ENCODE measurements at regions of chr18 and their contacts with region 1.

Region 1: GRCh38 chr18:23619388-23619881 is 33.1 kb upstream of the NPC1 start:
- DNase-seq: no peak
- ATAC-seq: peak; percentile 42
- H3K4me3 ChIP-seq: peak overlapping the region; percentile 57; the same call in 1 of the 2 replicates
- H3K27ac ChIP-seq: no peak overlapping the region
- H3K4me1 ChIP-seq: peaks cover 17% of the 10 kb centered on the region
- H3K27me3 ChIP-seq: peaks cover 0 to 5% of the 10 kb centered on the region in 2 experiments; a peak in 2 of 4 replicates
- CTCF ChIP-seq: no peak
- EP300 ChIP-seq: no peak; a peak in 1 of 4 replicates
- POLR2A ChIP-seq: no peak
- RAD21 ChIP-seq: no peak

Region 2: DNA sequence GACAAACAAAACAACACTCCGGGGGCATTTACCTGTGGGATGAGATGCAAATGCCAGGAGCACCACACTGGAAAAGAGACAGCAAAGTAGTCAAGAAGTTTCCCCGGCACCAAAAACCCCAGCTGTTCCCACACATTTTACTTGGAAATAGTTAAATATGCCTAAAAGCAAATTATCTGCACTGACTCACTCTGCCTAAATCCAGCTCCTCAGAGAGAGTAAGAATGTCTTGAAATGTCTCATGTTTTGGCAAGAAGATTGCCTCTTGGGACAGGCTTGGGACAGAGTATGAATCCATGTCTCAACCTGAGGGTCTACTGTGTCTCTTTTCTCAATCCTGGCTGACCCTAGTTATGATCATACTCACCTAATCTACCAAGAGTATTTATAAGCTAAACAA is 253.8 kb before region 1 on chr18:
- CTCF ChIA-PET with region 1: no interaction called
- POLR2A ChIA-PET with region 1: no interaction called
- RAD21 ChIA-PET with region 1: no interaction called
- SMC1A ChIA-PET with region 1: no interaction called
- in situ Hi-C with region 1: no loop called
- intact Hi-C with region 1: no loop called
- DNase-seq: no peak
- ATAC-seq: no peak
- H3K4me3 ChIP-seq: no peak overlapping the region
- H3K27ac ChIP-seq: no peak overlapping the region
- H3K4me1 ChIP-seq: no peaks in the 10 kb centered on the region
- H3K27me3 ChIP-seq: no peaks in the 10 kb centered on the region
- CTCF ChIP-seq: no peak
- EP300 ChIP-seq: no peak
- POLR2A ChIP-seq: no peak
- RAD21 ChIP-seq: no peak

Region 3: GRCh38 chr18:23586249-23587196 is 32.9 kb before region 1 on chr18 and contains the start of gene NPC1:
- CTCF ChIA-PET with region 1: interaction called, 18 read pairs
- POLR2A ChIA-PET with region 1: interaction called, 33 read pairs
- RAD21 ChIA-PET with region 1: interaction called, 22 read pairs
- SMC1A ChIA-PET with region 1: interaction called, 28 read pairs
- in situ Hi-C with region 1: no loop called
- intact Hi-C with region 1: loop called (anchors 2 kb)
- DNase-seq: peak; percentile 67
- ATAC-seq: peak; percentile 95
- H3K4me3 ChIP-seq: peak within 1 kb of the TSS; percentile 91
- H3K27ac ChIP-seq: peak within 1 kb of the TSS; percentile 96
- H3K4me1 ChIP-seq: peaks cover 7% of the 10 kb centered on the region; the same call in 1 of the 2 replicates
- H3K27me3 ChIP-seq: no peaks in the 10 kb centered on the region
- CTCF ChIP-seq: peak; percentile 81 to 88 (median 85)
- EP300 ChIP-seq: no peak
- POLR2A ChIP-seq: peak; percentile 93
- RAD21 ChIP-seq: peak; percentile 65
- polyA plus RNA-seq, gene NPC1: 10.1 to 11.0 TPM

Region 4: GRCh38 chr18:23596183-23596582 is 23.3 kb before region 1 on chr18:
- CTCF ChIA-PET with region 1: interaction called, 11 read pairs
- POLR2A ChIA-PET with region 1: no interaction called
- RAD21 ChIA-PET with region 1: interaction called, 4 read pairs
- SMC1A ChIA-PET with region 1: interaction called, 23 read pairs
- in situ Hi-C with region 1: no loop called
- intact Hi-C with region 1: no loop called
- DNase-seq: no peak
- ATAC-seq: no peak
- H3K4me3 ChIP-seq: no peak overlapping the region
- H3K27ac ChIP-seq: no peak overlapping the region
- H3K4me1 ChIP-seq: no peaks in the 10 kb centered on the region
- H3K27me3 ChIP-seq: no peaks in the 10 kb centered on the region
- CTCF ChIP-seq: no peak
- EP300 ChIP-seq: no peak
- POLR2A ChIP-seq: no peak
- RAD21 ChIP-seq: no peak

Region 5: DNA sequence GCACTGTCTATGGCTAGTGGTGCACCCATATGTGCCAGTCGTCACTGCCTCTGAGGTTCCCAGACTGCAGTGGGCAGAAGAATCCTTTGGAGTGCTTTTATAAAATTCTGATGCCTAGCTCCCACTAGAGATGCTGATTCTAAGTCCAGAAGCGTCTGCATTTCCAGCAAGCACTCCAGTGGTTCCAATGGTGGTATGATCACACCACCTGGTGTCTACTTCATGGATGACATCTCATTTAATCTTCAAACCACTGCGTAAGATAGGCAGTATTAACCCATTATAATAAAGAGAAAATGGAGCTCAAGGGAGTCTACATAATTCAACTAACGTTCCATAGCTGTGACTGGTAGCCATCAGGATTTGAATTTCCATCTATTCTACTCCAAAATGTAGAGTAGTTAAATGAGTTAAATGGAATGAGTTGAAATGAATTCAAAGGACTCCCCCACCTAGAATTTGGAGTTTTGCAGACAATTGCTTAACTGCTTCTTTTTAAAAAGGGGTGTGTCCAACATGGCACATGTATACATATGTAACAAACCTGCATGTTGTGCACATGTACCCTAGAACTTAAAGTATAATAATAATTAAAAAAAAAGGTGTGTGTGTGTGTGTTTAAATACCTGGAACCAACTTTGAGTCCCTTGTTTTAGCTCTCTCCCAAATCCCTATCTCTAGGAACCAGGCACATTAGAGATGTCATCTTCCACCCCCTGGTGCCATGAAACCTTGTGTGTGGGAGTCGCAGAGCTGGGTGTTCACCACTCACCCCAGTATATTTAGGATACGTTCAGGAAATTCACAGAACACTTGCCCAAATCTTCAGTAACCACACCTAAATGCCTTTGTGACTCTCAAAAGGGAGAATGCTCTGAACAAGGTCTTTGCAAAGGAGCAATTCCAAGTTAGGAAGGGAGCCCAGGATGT is 83.9 kb after region 1 on chr18:
- CTCF ChIA-PET with region 1: interaction called, 233 read pairs
- POLR2A ChIA-PET with region 1: no interaction called
- RAD21 ChIA-PET with region 1: interaction called, 148 read pairs
- SMC1A ChIA-PET with region 1: interaction called, 167 read pairs
- in situ Hi-C with region 1: no loop called
- intact Hi-C with region 1: loop called (anchors 1 kb)
- DNase-seq: no peak
- ATAC-seq: peak; percentile 92
- H3K4me3 ChIP-seq: no peak overlapping the region
- H3K27ac ChIP-seq: no peak overlapping the region
- H3K4me1 ChIP-seq: no peaks in the 10 kb centered on the region
- H3K27me3 ChIP-seq: no peaks in the 10 kb centered on the region
- CTCF ChIP-seq: peak; percentile 35 to 79 (median 41); a peak in 5 of 6 replicates
- EP300 ChIP-seq: no peak
- POLR2A ChIP-seq: no peak
- RAD21 ChIP-seq: peak; percentile 95

Region 6: GRCh38 chr18:23805898-23806297 is 186.5 kb after region 1 on chr18:
- CTCF ChIA-PET with region 1: interaction called, 56 read pairs
- POLR2A ChIA-PET with region 1: interaction called, 8 read pairs
- RAD21 ChIA-PET with region 1: interaction called, 11 read pairs
- SMC1A ChIA-PET with region 1: interaction called, 9 read pairs
- in situ Hi-C with region 1: loop called (anchors 5 kb)
- intact Hi-C with region 1: no loop called
- DNase-seq: no peak
- ATAC-seq: no peak
- H3K4me3 ChIP-seq: no peak overlapping the region
- H3K27ac ChIP-seq: no peak overlapping the region
- H3K4me1 ChIP-seq: peaks cover 10% of the 10 kb centered on the region
- H3K27me3 ChIP-seq: peaks cover 0 to 5% of the 10 kb centered on the region in 2 experiments; a peak in 1 of 4 replicates
- CTCF ChIP-seq: no peak
- EP300 ChIP-seq: no peak
- POLR2A ChIP-seq: no peak
- RAD21 ChIP-seq: no peak

Region 7: GRCh38 chr18:23812546-23813440 is 193.4 kb after region 1 on chr18:
- CTCF ChIA-PET with region 1: interaction called, 56 read pairs
- POLR2A ChIA-PET with region 1: interaction called, 8 read pairs
- RAD21 ChIA-PET with region 1: interaction called, 11 read pairs
- SMC1A ChIA-PET with region 1: interaction called, 9 read pairs
- in situ Hi-C with region 1: loop called (anchors 5 kb)
- intact Hi-C with region 1: loop called (anchors 1 kb)
- DNase-seq: no peak
- ATAC-seq: no peak
- H3K4me3 ChIP-seq: no peak overlapping the region
- H3K27ac ChIP-seq: no peak overlapping the region
- H3K4me1 ChIP-seq: peaks cover 15% of the 10 kb centered on the region
- H3K27me3 ChIP-seq: no peaks in the 10 kb centered on the region; a peak in 1 of 4 replicates
- CTCF ChIP-seq: peak; percentile 30 to 53 (median 38); a peak in 3 of 6 replicates
- EP300 ChIP-seq: no peak
- POLR2A ChIP-seq: no peak
- RAD21 ChIP-seq: peak; percentile 67

Region 8: DNA sequence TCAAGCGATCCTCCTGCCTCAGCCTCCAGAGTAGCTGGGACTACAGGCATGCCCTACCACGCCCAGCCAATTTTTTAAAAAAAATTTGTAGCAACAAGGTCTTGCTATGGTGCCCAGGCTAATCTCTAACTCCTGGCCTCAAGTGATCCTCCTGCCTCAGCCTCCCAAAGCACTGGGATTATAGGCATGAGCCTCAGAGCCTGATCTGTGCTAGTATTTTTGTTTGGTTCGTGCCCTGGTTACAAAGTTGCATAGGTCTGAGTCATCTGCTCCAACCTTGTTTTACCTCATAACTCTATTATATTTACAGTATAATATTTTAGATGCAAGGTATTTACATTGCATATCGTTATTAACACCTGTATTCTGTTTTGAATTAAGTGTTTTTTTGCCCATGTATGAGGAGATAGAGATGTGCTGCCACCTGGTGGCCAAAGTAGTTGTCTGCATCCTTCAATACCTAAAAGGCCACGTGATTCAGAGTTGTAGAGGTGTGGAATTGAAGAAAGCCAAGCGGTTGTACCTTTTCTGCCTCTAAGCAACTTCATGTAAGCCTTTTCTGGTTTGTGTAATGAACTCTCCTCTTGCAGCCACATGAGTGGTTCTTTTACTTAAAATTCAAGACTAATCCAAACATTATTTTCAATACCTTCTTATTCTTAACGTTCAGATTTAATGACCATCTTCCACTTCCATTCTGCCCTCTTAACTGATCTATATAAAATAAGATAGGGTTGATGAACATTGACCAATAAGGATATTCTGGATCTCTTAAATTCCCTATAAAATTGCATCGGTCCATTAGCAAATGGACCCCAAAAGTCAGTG is 499.5 kb after region 1 on chr18:
- CTCF ChIA-PET with region 1: interaction called, 4 read pairs
- POLR2A ChIA-PET with region 1: no interaction called
- RAD21 ChIA-PET with region 1: no interaction called
- SMC1A ChIA-PET with region 1: interaction called, 5 read pairs
- in situ Hi-C with region 1: loop called (anchors 10 kb)
- intact Hi-C with region 1: loop called (anchors 2 kb)
- DNase-seq: peak; percentile 56
- ATAC-seq: peak; percentile 93
- H3K4me3 ChIP-seq: no peak overlapping the region
- H3K27ac ChIP-seq: no peak overlapping the region
- H3K4me1 ChIP-seq: no peaks in the 10 kb centered on the region
- H3K27me3 ChIP-seq: no peaks in the 10 kb centered on the region
- CTCF ChIP-seq: peak; percentile 64 to 78 (median 77)
- EP300 ChIP-seq: no peak
- POLR2A ChIP-seq: no peak
- RAD21 ChIP-seq: peak; percentile 86

Measured in GM12878 (cell line).